Activated B cell treated with CpG ODN at 0.5 μM for 24 hours (primary cell): ENCODE measurements at regions of chr6 and their contacts with region 1.

Region 1: DNA sequence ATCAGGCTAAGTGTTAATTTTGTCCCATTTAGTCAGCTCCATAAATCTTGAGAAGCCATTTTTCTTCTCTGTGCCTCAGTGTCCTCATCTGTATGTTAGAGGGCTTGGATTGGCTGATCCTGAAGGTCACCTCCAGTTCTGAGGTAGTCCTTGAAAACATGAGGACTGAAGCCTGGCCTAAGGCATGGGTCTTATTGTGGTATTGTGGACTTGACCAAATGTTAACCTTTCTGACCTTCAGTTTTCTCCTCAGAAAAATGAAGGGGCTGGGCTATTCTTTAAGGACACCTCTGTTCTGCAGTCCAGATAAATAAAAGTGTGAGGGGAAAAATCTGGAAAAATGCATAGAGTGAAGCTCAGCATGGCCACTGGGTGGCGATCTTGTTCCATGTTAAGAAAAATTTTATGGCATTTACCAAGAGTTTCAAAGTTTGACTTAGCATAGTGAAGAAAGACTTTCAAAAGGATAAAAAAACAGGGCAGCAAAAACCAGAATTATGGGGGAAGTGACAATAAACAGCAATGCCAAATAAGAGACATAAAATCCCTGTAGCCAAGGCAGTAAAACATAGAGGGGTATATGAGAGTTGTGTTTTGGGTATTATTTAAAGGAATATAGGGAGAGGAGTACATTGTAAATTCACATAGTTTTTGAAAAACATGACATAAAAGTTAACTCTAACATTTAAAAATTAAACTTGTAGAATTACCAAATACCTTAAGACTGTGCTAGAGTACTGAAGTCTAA is 13.2 kb upstream of the TFB1M start:
- DNase-seq: no peak
- ATAC-seq: peak; percentile 62
- H3K4me3 Mint-ChIP-seq: no peak overlapping the region
- H3K27ac Mint-ChIP-seq: no peak overlapping the region
- H3K4me1 Mint-ChIP-seq: peaks cover 3% of the 10 kb centered on the region
- H3K27me3 Mint-ChIP-seq: no peaks in the 10 kb centered on the region
- CTCF ChIP-seq: peak; percentile 91

Region 2: DNA sequence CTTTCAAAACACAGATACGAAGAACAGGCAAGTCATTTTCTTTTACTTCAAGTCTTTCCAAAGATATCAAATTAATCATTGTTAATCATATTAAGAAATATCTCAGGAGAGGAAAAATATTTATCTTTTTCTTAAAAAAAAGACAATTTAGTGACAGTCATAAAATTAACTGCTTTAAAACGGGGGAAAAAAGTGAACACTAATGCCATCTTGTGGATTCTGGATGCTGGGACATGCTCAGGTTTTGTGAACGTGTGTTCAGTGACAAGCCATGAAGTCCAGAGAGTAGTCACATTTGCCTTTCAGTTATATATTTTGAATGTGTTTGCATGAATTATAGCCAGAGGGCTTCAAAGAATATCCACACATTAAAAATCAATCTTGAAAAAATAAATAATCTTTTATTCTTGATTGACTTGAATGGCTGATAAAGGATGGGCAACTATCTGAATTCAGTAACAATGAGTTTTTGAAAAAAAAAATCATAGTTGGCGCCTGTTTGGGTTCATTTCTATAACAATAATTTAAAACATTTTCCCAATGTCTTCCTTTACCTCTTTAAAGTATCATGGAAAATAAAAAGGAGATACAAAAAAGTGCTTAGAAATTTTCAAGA is 202.8 kb after region 1 on chr6:
- CTCF ChIA-PET with region 1: interaction called, 24 read pairs
- POLR2A ChIA-PET with region 1: interaction called, 3 read pairs
- intact Hi-C with region 1: loop called (anchors 1 kb)
- DNase-seq: no peak
- ATAC-seq: peak; percentile 37
- H3K4me3 Mint-ChIP-seq: no peak overlapping the region
- H3K27ac Mint-ChIP-seq: no peak overlapping the region
- H3K4me1 Mint-ChIP-seq: peaks cover 9% of the 10 kb centered on the region
- H3K27me3 Mint-ChIP-seq: no peaks in the 10 kb centered on the region
- CTCF ChIP-seq: no peak

Region 3: DNA sequence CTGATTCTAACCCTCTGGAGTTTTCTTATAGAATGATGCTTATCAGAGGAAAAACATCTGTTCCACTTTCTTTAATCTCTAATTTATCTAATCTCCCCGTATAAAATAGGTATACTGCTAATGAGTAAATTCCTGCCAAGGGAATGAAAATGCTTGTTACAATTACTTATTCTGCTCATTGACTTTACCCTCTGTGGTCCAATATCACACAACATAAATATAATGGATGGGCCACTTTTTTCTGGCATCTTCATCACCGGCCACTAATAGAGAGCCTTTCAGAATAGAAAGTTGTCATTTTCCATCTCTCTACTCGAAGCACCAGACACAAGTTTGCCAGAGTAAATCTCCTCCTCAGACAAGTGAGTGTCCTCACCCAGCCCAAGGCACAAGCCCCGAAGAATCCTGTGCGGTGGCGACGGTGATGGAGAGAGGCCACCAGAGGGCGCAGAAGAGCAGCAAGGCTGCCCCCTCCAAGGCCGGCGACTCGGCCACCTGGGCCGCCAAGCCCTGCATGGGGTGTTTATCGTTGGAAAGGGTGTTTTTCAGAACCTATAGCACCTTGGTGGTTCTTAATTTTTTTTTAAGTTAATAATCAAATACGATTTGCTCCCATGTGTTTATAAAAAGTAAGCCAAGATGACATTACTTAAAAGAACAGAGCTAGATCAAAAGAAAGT is 1236.8 kb after region 1 on chr6:
- CTCF ChIA-PET with region 1: interaction called, 3 read pairs
- POLR2A ChIA-PET with region 1: no interaction called
- intact Hi-C with region 1: loop called (anchors 1 kb)
- DNase-seq: peak; percentile 78
- ATAC-seq: peak; percentile 100
- H3K4me3 Mint-ChIP-seq: no peak overlapping the region
- H3K27ac Mint-ChIP-seq: no peak overlapping the region
- H3K4me1 Mint-ChIP-seq: peaks cover 10% of the 10 kb centered on the region
- H3K27me3 Mint-ChIP-seq: peaks cover 5% of the 10 kb centered on the region
- CTCF ChIP-seq: peak; percentile 76

Region 4: DNA sequence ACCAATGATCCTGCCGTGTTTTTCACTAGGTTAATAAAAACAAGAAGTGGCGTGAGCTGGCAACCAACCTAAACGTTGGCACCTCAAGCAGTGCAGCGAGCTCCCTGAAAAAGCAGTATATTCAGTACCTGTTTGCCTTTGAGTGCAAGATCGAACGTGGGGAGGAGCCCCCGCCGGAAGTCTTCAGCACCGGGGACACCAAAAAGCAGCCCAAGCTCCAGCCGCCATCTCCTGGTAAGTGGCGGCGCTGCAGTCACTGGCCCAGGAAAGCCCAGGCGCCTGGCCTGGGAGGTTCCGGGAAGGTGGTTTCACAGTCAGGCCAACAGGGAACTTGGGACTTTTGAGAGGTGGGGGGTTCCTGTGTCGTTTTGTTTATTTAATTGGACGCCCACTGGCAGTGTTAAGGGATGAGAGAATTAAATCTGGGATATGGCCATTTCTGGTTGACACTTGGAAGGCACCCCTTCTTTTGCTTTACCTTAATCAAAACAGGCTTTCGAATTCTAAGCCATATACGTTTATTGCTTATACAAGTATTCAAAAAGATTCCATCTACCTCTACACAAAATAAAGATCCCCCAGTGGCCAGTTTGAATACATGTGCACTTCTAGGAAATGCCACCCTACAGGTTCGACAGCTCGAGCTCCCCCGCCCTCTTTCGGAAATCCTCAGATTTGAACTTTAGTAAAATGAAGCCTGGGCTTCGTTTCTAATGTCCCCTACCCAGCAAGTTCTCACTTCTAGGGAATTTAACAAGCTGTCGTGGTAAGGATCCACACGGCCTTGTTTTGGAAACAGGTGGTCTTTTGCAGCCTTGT is 1856.9 kb after region 1 on chr6:
- CTCF ChIA-PET with region 1: no interaction called
- POLR2A ChIA-PET with region 1: no interaction called
- intact Hi-C with region 1: loop called (anchors 2 kb)
- DNase-seq: peak; percentile 30
- ATAC-seq: peak; percentile 75
- H3K4me3 Mint-ChIP-seq: no peak overlapping the region
- H3K27ac Mint-ChIP-seq: no peak overlapping the region
- H3K4me1 Mint-ChIP-seq: peaks cover 3% of the 10 kb centered on the region
- H3K27me3 Mint-ChIP-seq: no peaks in the 10 kb centered on the region
- CTCF ChIP-seq: no peak